ENCODE measurements at regions of chr2 and their contacts with region 1.

Region 1: DNA sequence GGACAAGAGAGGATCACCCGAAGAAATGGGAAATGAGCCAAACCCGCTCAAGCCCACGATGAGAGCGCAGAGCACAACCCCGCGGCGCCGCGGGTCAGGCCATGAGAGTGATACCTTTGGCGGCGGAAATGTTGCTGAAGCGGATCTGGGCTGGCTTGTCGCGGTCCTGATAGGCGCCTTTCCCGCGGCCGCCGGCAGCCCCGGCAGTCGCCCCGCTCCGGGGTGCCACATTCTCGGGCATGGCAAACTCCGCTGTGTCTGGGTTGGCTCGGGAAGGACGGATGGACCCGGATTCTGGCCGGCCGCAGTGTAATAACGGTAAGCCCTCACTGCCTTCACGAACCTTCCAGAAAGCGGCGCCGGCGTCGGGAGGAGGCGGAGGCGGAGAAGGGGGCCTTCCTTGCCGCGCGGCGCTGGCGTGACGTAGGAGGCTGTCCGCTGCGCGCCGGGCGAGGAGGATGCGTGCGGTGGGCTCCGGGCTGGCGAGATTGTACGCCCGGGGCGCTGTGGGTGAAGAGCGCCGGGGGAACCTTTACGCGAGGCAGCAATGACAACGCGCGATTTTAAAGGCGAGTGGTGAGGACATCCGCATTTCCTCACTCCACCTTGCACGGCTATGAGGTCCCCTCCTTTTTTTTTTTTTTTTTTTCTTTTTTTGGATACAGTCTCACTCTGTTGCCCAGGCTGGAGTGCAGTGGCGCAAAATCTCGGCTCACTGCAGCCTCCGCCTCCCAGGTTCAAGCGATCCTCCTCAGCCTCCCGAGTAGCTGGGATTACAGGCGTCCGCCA is at the start of gene CCT4:
- DNase-seq: peak; percentile 81 to 98 (median 92)
- ATAC-seq: peak; percentile 89
- H3K4me3 ChIP-seq: peak within 1 kb of the TSS; percentile 85 to 100
- H3K4me3 Mint-ChIP-seq: peak within 1 kb of the TSS; percentile 95
- H3K27ac ChIP-seq: peak within 1 kb of the TSS; percentile 99
- H3K27ac Mint-ChIP-seq: peak within 1 kb of the TSS; percentile 98
- H3K4me1 ChIP-seq: peaks cover 28% of the 10 kb centered on the region
- H3K4me1 Mint-ChIP-seq: peaks cover 33% of the 10 kb centered on the region
- H3K27me3 ChIP-seq: no peaks in the 10 kb centered on the region
- H3K27me3 Mint-ChIP-seq: no peaks in the 10 kb centered on the region
- CTCF ChIP-seq: no peak
- total RNA-seq, gene CCT4: 102 to 106 TPM

Region 2: GRCh38 chr2:61016808-61017555 is 871.5 kb before region 1 on chr2:
- CTCF ChIA-PET with region 1: no interaction called
- POLR2A ChIA-PET with region 1: no interaction called
- intact Hi-C with region 1: loop called in 1 of 2 experiments (anchors 5 kb)
- DNase-seq: peak; percentile 30 to 81 (median 67)
- ATAC-seq: peak; percentile 69
- H3K4me3 ChIP-seq: peak overlapping the region; percentile 80 to 99
- H3K4me3 Mint-ChIP-seq: peak overlapping the region; percentile 99
- H3K27ac ChIP-seq: peak overlapping the region; percentile 69 to 84
- H3K27ac Mint-ChIP-seq: peak overlapping the region; percentile 95
- H3K4me1 ChIP-seq: peaks cover 21% of the 10 kb centered on the region
- H3K4me1 Mint-ChIP-seq: peaks cover 46% of the 10 kb centered on the region
- H3K27me3 ChIP-seq: no peaks in the 10 kb centered on the region
- H3K27me3 Mint-ChIP-seq: no peaks in the 10 kb centered on the region
- CTCF ChIP-seq: no peak

Region 3: GRCh38 chr2:61694312-61695274 is 193.9 kb before region 1 on chr2:
- CTCF ChIA-PET with region 1: no interaction called
- POLR2A ChIA-PET with region 1: no interaction called
- intact Hi-C with region 1: loop called in 1 of 2 experiments (anchors 1 kb)
- DNase-seq: peak; percentile 65 to 89 (median 82)
- ATAC-seq: peak; percentile 95
- H3K4me3 ChIP-seq: peak overlapping the region; percentile 88 to 93
- H3K4me3 Mint-ChIP-seq: peak overlapping the region; percentile 90
- H3K27ac ChIP-seq: peak overlapping the region; percentile 43 to 63
- H3K27ac Mint-ChIP-seq: peak overlapping the region; percentile 87
- H3K4me1 ChIP-seq: peaks cover 14% of the 10 kb centered on the region
- H3K4me1 Mint-ChIP-seq: peaks cover 16% of the 10 kb centered on the region
- H3K27me3 ChIP-seq: no peaks in the 10 kb centered on the region
- H3K27me3 Mint-ChIP-seq: no peaks in the 10 kb centered on the region
- CTCF ChIP-seq: peak; percentile 52

Region 4: DNA sequence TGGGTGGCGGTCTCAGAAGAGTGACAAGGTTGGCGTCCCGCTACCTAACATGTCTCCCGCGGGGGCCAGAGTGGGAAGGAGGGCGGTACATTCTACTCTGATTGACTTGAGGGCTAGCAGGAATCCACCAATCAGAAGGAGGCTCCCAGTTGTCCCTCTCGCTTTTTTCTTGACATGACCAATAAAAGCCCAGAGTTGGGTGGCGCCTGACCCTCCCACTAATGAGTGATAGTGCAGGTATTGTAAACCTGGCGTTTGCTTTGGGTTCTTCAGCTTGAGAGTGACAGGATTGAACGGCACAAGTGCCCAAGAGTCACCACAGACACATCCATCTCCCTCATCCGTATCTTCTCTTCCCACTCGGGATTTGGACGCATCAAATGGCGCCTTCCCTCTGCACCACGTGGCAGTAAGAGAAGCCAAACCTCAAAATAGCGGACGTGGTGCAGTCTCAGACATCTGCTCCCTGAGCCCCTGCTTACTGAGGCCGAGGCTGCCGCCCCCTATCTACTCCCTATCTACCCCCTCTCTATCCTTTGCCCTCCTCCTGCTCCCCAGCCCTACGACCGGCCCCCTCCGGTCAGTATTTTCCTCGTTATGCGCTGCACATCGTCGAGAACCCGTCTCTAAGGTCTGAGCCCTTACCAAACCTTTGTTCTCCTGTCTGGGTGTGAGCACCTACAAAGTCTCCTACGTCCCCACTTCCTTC is 33.8 kb before region 1 on chr2:
- CTCF ChIA-PET with region 1: no interaction called
- POLR2A ChIA-PET with region 1: interaction called, 3 read pairs
- intact Hi-C with region 1: loop called (anchors 1 kb)
- DNase-seq: peak; percentile 80 to 98 (median 87)
- ATAC-seq: peak; percentile 89
- H3K4me3 ChIP-seq: peak overlapping the region; percentile 79 to 88
- H3K4me3 Mint-ChIP-seq: peak overlapping the region; percentile 97
- H3K27ac ChIP-seq: peak overlapping the region; percentile 64 to 81
- H3K27ac Mint-ChIP-seq: peak overlapping the region; percentile 96
- H3K4me1 ChIP-seq: peaks cover 12% of the 10 kb centered on the region
- H3K4me1 Mint-ChIP-seq: peaks cover 15% of the 10 kb centered on the region
- H3K27me3 ChIP-seq: no peaks in the 10 kb centered on the region
- H3K27me3 Mint-ChIP-seq: no peaks in the 10 kb centered on the region
- CTCF ChIP-seq: no peak

Region 5: GRCh38 chr2:62415019-62415431 is 526.6 kb after region 1 on chr2:
- CTCF ChIA-PET with region 1: no interaction called
- POLR2A ChIA-PET with region 1: no interaction called
- intact Hi-C with region 1: loop called in 1 of 2 experiments (anchors 1 kb)
- DNase-seq: no peak
- ATAC-seq: no peak
- H3K4me3 ChIP-seq: no peak overlapping the region
- H3K4me3 Mint-ChIP-seq: no peak overlapping the region
- H3K27ac ChIP-seq: no peak overlapping the region
- H3K27ac Mint-ChIP-seq: no peak overlapping the region
- H3K4me1 ChIP-seq: peaks cover 6% of the 10 kb centered on the region
- H3K4me1 Mint-ChIP-seq: peaks cover 9% of the 10 kb centered on the region
- H3K27me3 ChIP-seq: no peaks in the 10 kb centered on the region
- H3K27me3 Mint-ChIP-seq: peaks cover 2% of the 10 kb centered on the region
- CTCF ChIP-seq: no peak

Measured in CD8-positive, alpha-beta T cell (primary cell).